ENCODE measurements at regions of chr5 and their contacts with region 1.

Region 1: GRCh38 chr5:158292981-158293380 is 434.0 kb upstream of the CLINT1 start:
- DNase-seq: no peak
- ATAC-seq: no peak

Region 2: GRCh38 chr5:159049844-159050315 is 756.9 kb after region 1 on chr5:
- intact Hi-C with region 1: loop called (anchors 5 kb)
- DNase-seq: no peak
- ATAC-seq: peak; percentile 79

Measured in sciatic nerve (tissue), 2 donors.